ENCODE measurements at regions of chr6 and their contacts with region 1.

Region 1: GRCh38 chr6:83067448-83068413 is at the start of gene DOP1A:
- DNase-seq: peak; percentile 95 to 98 (median 97)
- H3K4me3 ChIP-seq: peak within 1 kb of the TSS; percentile 76 to 94 (median 88)
- H3K27ac ChIP-seq: peak within 1 kb of the TSS; percentile 66 to 89
- H3K4me1 ChIP-seq: peaks cover 13 to 39% (median 32%) of the 10 kb centered on the region in 4 experiments
- H3K27me3 ChIP-seq: no peaks in the 10 kb centered on the region

Region 2: DNA sequence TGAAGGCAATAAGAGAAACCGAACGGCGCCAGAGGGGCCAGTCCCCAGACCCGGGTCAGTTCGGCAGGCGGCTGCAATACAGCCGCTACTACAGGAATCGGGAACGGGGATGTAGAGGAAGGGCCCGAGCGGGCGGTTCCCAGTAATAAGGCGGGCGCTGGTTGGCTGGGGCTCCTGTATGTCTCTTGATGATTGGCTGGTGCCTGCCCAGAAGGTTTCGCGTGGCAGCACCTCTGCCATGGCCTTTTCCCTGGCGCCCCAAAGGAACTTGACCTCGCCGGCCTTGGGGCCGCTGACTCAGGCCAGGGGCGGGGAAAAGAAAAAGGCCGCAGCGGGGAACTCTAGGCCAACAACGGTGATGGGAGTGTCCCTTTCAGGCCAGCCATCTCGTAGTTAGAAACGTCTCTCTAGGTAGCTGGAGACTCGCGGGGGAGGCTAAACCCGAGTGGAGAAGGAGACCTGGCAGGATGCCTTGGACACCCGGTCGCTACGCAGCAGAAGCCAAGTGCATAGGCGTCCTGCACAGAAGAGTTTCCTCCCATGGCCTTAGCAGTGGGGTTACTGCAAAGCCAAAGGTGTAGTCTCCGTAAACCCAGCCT is 820.0 kb before region 1 on chr6 and contains the start of gene IBTK:
- CTCF ChIA-PET with region 1: interaction called, 13 read pairs
- POLR2A ChIA-PET with region 1: no interaction called
- DNase-seq: peak; percentile 87 to 92 (median 91)
- H3K4me3 ChIP-seq: peak within 1 kb of the TSS; percentile 75 to 95 (median 89)
- H3K27ac ChIP-seq: peak within 1 kb of the TSS; percentile 81 to 93
- H3K4me1 ChIP-seq: peaks cover 7 to 34% (median 16%) of the 10 kb centered on the region in 4 experiments
- H3K27me3 ChIP-seq: no peaks in the 10 kb centered on the region

Region 3: GRCh38 chr6:82270881-82271645 is 796.7 kb before region 1 on chr6:
- CTCF ChIA-PET with region 1: interaction called, 11 read pairs
- POLR2A ChIA-PET with region 1: no interaction called
- DNase-seq: peak; percentile 24 to 55 (median 54)
- H3K4me3 ChIP-seq: no peak overlapping the region
- H3K27ac ChIP-seq: no peak overlapping the region
- H3K4me1 ChIP-seq: no peaks in the 10 kb centered on the region
- H3K27me3 ChIP-seq: peaks cover 0 to 4% (median 0%) of the 10 kb centered on the region in 5 experiments

Region 4: GRCh38 chr6:83138118-83138722 is 70.5 kb after region 1 on chr6:
- CTCF ChIA-PET with region 1: interaction called, 33 read pairs
- POLR2A ChIA-PET with region 1: no interaction called
- DNase-seq: no peak
- H3K4me3 ChIP-seq: no peak overlapping the region
- H3K27ac ChIP-seq: no peak overlapping the region
- H3K4me1 ChIP-seq: no peaks in the 10 kb centered on the region
- H3K27me3 ChIP-seq: no peaks in the 10 kb centered on the region

Region 5: GRCh38 chr6:83167726-83168278 is 100.1 kb after region 1 on chr6:
- CTCF ChIA-PET with region 1: interaction called, 10 read pairs
- POLR2A ChIA-PET with region 1: no interaction called
- DNase-seq: no peak
- H3K4me3 ChIP-seq: no peak overlapping the region
- H3K27ac ChIP-seq: no peak overlapping the region
- H3K4me1 ChIP-seq: no peaks in the 10 kb centered on the region
- H3K27me3 ChIP-seq: no peaks in the 10 kb centered on the region

Region 6: GRCh38 chr6:83192871-83193746 is 125.4 kb after region 1 on chr6 and contains the starts of genes PGM3 and RWDD2A:
- CTCF ChIA-PET with region 1: interaction called, 20 read pairs
- POLR2A ChIA-PET with region 1: no interaction called
- DNase-seq: peak; percentile 84 to 94 (median 93)
- H3K4me3 ChIP-seq: peak within 1 kb of the TSS; percentile 86 to 100 (median 92)
- H3K27ac ChIP-seq: peak within 1 kb of the TSS in 1 of 2 experiments; percentile 78
- H3K4me1 ChIP-seq: peaks cover 8 to 18% (median 11%) of the 10 kb centered on the region in 4 experiments
- H3K27me3 ChIP-seq: peaks cover 0 to 3% (median 0%) of the 10 kb centered on the region in 5 experiments

Region 7: DNA sequence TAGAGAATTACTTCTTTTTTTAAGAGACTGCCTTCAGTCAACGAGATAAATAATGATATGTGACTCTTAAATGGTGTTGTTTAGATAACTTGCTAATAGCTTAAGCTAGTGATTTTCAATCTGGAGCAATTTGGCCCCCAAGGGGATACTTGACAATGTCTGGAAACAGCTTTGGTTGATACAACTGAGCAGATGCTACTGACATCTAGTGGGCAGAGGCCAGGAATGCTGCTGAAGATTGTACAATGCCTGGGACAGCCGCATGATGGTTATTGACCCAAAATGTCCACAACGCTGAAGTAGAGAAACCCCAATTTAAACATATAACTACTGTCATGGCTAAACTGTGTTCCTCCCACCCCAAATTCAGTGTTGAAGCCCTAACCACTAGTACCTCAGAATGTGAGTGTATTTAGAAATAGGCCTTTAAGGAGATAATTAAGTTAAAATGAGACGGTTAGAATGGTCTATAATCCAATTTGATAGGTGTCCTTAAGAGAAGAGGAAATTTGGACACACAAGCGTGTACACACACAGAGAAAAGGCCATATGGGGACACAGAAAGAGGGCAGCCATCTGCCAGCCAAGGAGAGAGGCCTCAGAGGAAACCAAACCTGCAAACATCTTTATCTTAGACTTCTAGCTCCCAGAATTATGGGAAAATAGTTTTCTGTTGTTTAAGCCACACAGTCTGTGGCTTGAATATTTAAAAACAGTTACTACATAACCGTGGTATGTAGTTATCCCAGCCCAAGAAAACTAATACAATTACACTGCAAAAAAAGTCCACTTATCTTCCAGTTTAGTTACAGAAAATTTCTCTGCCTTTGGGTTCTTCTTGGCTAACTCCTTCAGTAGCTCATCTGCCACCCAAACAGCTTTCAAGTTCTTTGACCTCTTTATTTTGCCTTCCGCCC is 147.7 kb after region 1 on chr6:
- CTCF ChIA-PET with region 1: interaction called, 86 read pairs
- POLR2A ChIA-PET with region 1: interaction called, 3 read pairs
- DNase-seq: peak; percentile 71 to 82 (median 80)
- H3K4me3 ChIP-seq: no peak overlapping the region
- H3K27ac ChIP-seq: no peak overlapping the region
- H3K4me1 ChIP-seq: no peaks in the 10 kb centered on the region
- H3K27me3 ChIP-seq: peaks cover 0 to 2% (median 0%) of the 10 kb centered on the region in 5 experiments